ENCODE measurements at regions of chr1 and their contacts with region 1.

Region 1: GRCh38 chr1:160205242-160206035 is at the start of gene PEA15:
- DNase-seq: peak; percentile 69 to 90 (median 80)
- ATAC-seq: peak; percentile 90 to 93 (median 92)
- H3K4me3 ChIP-seq: peak within 1 kb of the TSS; percentile 76 to 91 (median 89)
- H3K27ac ChIP-seq: peak within 1 kb of the TSS; percentile 75 to 82 (median 76)
- H3K4me1 ChIP-seq: peaks cover 7 to 26% (median 15%) of the 10 kb centered on the region in 3 donors
- H3K27me3 ChIP-seq: no peaks in the 10 kb centered on the region
- CTCF ChIP-seq: no peak
- total RNA-seq, gene PEA15: 15.0 to 47.3 (median 23.0) TPM

Region 2: DNA sequence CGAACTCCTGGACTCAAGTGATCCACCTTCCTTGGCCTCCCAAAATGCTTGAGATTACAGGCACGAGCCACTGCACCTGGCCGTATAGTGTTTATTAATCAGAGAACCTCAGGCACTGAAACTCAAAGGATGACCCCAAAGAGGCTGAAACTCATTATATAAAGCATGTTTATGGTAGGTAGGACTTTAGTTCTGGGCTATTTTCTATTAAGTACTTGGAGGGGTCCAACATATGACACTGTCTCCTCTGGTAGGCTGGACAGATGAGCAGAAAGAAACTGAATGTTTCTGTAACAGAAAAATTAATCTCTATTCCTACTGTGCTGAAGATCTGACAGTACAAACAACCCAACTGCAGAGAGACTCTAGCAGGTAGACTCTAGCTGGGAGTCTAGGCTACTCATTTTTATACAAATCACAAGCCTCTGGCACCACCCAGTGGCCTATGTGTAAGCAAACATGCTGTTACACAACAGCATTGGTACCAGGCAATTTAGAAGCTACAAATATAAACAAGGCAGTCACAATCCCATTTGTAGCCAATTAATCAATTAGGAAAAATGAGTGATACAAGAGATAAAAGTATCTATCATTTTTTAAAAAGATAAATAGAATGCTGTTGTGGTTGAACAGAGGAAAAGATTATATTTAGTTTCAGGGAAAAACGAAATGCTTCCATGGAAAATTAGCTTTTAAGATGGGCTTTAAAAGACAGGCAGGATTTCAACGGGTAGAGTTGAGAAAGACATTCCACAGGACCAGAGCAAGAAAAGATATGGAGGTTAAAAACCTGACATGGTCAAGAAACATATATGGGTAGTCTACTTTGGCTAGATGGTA is 46.5 kb after region 1 on chr1:
- intact Hi-C with region 1: loop called in 1 of 3 experiments (anchors 5 kb)
- DNase-seq: peak in 5 of 6 donors; percentile 55 to 72 (median 69)
- ATAC-seq: peak; percentile 90 to 97 (median 96)
- H3K4me3 ChIP-seq: no peak overlapping the region
- H3K27ac ChIP-seq: peak overlapping the region in 2 of 4 donors; percentile 1 to 22
- H3K4me1 ChIP-seq: peaks cover 14 to 30% (median 26%) of the 10 kb centered on the region in 3 donors
- H3K27me3 ChIP-seq: no peaks in the 10 kb centered on the region
- CTCF ChIP-seq: peak; percentile 39 to 59 (median 47)

Region 3: DNA sequence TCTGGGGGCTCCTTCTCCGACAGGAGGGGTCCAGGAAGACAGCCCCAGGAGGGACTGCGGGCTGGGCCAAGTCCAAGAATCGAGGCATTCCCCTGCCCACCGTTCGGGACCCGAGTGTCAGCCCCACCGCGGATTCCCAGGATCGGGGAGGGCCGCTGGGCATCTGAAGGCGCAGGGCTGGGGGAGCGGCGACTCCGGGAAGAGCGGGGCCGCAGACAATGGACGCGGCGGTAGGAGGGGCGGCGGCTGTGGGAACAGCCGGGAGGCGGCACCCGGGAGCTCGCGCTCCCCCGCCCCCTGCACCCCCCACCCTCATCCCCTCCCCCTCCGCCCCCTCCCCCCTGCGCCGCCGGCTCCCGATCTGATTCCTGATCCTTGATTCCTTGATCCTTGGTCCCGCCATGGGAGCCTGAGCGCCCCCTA is 194.8 kb after region 1 on chr1 and contains the start of gene VANGL2:
- intact Hi-C with region 1: no loop called
- DNase-seq: peak; percentile 81 to 92 (median 86)
- ATAC-seq: peak; percentile 92 to 96 (median 94)
- H3K4me3 ChIP-seq: peak within 1 kb of the TSS; percentile 39 to 86 (median 76)
- H3K27ac ChIP-seq: peak within 1 kb of the TSS in 2 of 4 donors; percentile 50 to 60
- H3K4me1 ChIP-seq: no peaks in the 10 kb centered on the region
- H3K27me3 ChIP-seq: no peaks in the 10 kb centered on the region
- CTCF ChIP-seq: no peak
- total RNA-seq, gene VANGL2: 2.5 to 9.9 (median 4.4) TPM

Measured in pancreas (tissue), 10 donors.